Prostate gland (tissue), 2 donors: ENCODE measurements at regions of chr22 and their contacts with region 1.

Region 1: DNA sequence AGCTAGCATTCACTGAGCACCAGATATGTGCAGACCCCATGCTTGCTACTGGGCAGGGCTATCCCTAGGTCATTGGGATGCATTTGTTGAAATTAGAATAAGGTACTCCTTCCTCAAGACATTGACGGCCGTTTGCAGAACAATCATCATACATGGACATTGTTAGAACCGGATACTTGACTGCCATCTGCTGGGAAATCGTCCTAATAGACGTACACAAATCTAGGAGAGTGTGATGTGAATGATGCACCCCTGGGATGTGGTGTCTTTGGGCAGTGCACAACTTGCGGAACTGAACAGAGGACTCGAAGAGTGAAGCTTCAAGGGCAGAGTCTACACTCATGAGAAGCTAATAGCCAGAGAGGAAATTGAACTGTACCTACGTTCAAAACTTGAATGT is 35.9 kb downstream of the MYO18B start:
- DNase-seq: peak; percentile 16
- H3K4me3 ChIP-seq: no peak overlapping the region
- H3K27ac ChIP-seq: no peak overlapping the region
- H3K4me1 ChIP-seq: no peaks in the 10 kb centered on the region
- H3K27me3 ChIP-seq: no peaks in the 10 kb centered on the region
- CTCF ChIP-seq: peak in 3 of 4 experiments; percentile 16 to 27 (median 19)
- POLR2A ChIP-seq: no peak

Region 2: DNA sequence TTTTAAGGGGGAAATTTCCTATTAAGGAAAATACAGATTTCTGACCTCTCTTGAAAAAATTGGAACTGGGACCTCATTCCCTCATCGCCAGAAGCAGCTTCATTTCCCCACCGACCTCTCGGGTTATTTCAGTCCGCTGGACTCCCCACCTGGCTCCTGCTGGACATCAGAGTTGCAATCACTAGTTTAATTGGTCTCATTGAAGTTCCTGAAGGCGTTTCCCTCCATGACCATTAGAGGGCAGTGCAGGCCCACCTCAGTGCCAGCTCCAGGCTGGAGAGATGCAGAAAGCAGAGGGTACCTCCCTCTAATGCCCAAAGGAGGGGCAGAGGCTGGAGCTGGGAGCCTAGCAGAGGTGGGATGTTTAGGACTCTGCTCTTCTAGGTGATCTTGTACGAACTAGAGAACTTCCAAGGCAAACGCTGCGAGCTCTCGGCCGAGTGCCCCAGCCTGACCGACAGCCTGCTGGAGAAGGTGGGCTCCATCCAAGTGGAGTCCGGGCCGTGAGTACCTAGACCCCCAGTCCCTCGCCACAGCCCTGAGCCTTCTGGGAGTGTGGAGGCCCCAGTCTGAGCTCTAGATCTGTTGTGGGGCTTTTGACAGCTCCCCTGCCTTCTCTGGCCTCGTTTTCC is 575.5 kb before region 1 on chr22:
- intact Hi-C with region 1: loop called (anchors 5 kb)
- DNase-seq: peak; percentile 41
- H3K4me3 ChIP-seq: no peak overlapping the region
- H3K27ac ChIP-seq: no peak overlapping the region
- H3K4me1 ChIP-seq: no peaks in the 10 kb centered on the region
- H3K27me3 ChIP-seq: no peaks in the 10 kb centered on the region
- CTCF ChIP-seq: peak; percentile 48 to 69 (median 64)
- POLR2A ChIP-seq: no peak

Region 3: DNA sequence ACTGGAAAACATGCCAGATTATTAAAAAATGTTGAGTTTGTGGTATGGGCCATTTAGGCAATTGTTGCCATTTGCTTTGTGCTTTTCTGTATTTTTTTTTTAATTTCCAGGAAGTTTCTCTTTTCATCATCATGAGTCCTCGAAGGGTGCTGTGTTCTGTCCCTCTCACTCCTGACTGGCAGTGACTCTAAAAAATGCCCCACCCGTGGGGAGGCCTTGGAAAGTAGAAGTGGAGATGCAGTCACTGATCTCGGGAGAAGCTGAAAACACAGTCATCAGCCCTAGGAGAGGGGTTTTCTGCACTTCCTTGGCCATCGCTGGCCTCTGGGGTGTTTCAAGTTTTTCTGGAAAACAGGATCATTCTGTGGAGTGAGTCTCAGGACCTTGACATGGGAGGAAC is 311.9 kb before region 1 on chr22:
- intact Hi-C with region 1: loop called (anchors 5 kb)
- DNase-seq: no peak
- H3K4me3 ChIP-seq: no peak overlapping the region
- H3K27ac ChIP-seq: no peak overlapping the region
- H3K4me1 ChIP-seq: no peaks in the 10 kb centered on the region
- H3K27me3 ChIP-seq: no peaks in the 10 kb centered on the region
- CTCF ChIP-seq: no peak
- POLR2A ChIP-seq: no peak

Region 4: DNA sequence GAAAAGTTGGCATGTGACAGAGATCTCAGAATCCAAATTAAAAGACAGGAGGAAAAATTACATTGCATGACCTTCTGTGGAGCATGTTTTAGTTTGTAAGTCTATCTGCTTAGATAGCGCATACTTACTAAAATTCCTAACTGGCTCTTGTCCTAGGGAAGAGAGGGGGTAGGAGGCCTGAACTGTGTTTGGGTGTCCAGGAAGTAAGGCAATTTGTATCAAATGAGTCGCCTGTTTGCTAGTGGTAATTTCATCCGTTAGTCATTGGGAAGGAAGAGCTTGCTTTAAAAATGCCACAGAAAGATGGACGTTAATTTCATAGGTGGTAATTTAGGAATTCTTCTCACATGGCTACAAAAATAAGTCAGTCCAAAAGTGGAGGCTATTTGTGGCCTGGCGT is 194.9 kb before region 1 on chr22:
- intact Hi-C with region 1: no loop called
- DNase-seq: no peak
- H3K4me3 ChIP-seq: no peak overlapping the region
- H3K27ac ChIP-seq: no peak overlapping the region
- H3K4me1 ChIP-seq: no peaks in the 10 kb centered on the region
- H3K27me3 ChIP-seq: no peaks in the 10 kb centered on the region
- CTCF ChIP-seq: no peak
- POLR2A ChIP-seq: no peak

Region 5: DNA sequence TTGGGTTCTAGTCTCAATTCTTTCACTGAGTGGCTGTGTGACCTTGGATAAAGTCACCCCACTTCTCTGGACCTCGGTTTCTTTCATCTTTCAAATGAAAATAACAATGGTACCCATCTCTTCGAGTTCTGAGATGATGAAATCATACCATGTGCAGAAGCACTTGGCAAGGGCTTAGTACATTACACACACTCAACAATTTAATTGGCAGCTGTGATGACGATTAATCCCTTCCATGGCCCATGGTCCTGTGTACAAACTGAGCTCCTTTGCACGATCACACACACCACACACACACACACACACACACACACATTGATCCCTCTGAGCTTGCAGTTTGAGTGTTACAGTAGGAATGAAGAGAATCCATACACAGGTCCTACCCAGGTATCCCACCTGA is 547.8 kb after region 1 on chr22:
- intact Hi-C with region 1: loop called (anchors 5 kb)
- DNase-seq: no peak
- H3K4me3 ChIP-seq: no peak overlapping the region
- H3K27ac ChIP-seq: no peak overlapping the region
- H3K4me1 ChIP-seq: no peaks in the 10 kb centered on the region
- H3K27me3 ChIP-seq: peaks cover 2% of the 10 kb centered on the region
- CTCF ChIP-seq: no peak
- POLR2A ChIP-seq: no peak